ENCODE measurements at regions of chr9 and their contacts with region 1.

Region 1: GRCh38 chr9:84862810-84863287 is 193.3 kb downstream of the NTRK2 start:
- DNase-seq: peak; percentile 51 to 79
- ATAC-seq: peak; percentile 10
- H3K4me3 ChIP-seq: no peak overlapping the region
- H3K27ac ChIP-seq: no peak overlapping the region
- H3K4me1 ChIP-seq: no peaks in the 10 kb centered on the region
- H3K27me3 ChIP-seq: no peaks in the 10 kb centered on the region

Region 2: DNA sequence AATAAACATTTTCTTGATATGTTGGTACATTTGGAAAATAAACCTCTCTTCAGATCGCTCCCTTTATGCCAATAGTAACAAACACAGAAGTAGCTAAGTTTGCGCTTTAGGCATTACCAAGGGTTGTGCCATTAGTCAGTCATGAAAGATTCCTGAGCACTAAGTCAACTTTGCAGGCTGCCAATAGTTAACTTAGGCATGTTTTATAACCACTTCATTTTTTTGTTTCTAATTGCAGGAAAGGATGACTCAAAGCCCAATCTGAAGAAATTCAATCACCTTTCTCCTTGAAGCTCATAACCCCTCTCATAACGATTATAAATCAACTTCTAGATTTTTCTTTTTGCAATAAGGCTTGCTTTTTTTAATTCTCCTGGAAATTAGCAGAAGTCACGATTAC is 361.9 kb after region 1 on chr9:
- intact Hi-C with region 1: loop called in 1 of 2 experiments (anchors 10 kb)
- DNase-seq: no peak
- ATAC-seq: peak; percentile 81
- H3K4me3 ChIP-seq: no peak overlapping the region
- H3K27ac ChIP-seq: no peak overlapping the region
- H3K4me1 ChIP-seq: peaks cover 0 to 2% of the 10 kb centered on the region in 2 donors
- H3K27me3 ChIP-seq: no peaks in the 10 kb centered on the region

Measured in aorta (tissue), 5 donors.